GM13976 (cell line): ENCODE measurements at regions of chr19 and their contacts with region 1.

Region 1: GRCh38 chr19:7083076-7083956 is 13.8 kb downstream of the ZNF557 start:
- DNase-seq: no peak
- CTCF ChIP-seq: no peak

Region 2: GRCh38 chr19:6674868-6675305 is 408.4 kb before region 1 on chr19:
- in situ Hi-C with region 1: no loop called
- DNase-seq: peak; percentile 87
- CTCF ChIP-seq: peak; percentile 5

Region 3: DNA sequence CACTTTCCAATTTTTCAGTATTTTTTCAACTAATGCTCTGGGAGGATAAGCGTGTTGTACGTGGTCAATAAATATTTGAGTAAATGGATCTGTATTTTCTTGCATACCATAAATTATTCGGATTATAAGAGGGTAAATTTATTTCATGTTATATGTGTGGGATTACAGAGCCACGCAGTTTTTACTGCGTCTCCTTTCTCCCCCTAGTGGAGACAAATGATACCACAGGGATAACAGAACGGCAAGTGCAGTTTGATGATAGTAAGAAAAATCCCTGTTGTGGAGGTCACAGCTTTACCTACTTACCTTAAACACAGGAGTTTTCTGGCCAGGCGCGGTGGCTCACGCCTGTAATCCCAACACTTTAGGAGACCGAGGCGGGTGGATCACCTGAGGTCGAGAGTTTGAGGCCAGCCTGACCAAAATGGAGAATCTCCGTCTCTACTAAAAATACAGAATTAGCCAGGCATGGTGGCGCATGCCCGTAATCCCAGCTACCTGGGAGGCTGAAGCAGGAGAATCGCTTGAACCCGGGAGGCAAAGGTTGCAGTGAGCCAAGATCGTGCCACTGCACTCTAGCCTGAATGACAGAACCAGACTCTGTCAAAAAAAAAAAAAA is 78.9 kb before region 1 on chr19:
- in situ Hi-C with region 1: loop called (anchors 10 kb)
- DNase-seq: peak; percentile 38
- CTCF ChIP-seq: peak; percentile 42

Region 4: GRCh38 chr19:7137120-7137519 is 53.8 kb after region 1 on chr19:
- in situ Hi-C with region 1: no loop called
- DNase-seq: no peak
- CTCF ChIP-seq: no peak